ENCODE measurements at regions of chr5 and their contacts with region 1.

Region 1: GRCh38 chr5:38831909-38832308 is 13.9 kb upstream of the OSMR start:
- DNase-seq: no peak
- H3K4me3 ChIP-seq: no peak overlapping the region
- H3K27ac ChIP-seq: no peak overlapping the region
- H3K4me1 ChIP-seq: peaks cover 0 to 29% (median 15%) of the 10 kb centered on the region in 6 donors
- H3K27me3 ChIP-seq: peaks cover 0 to 11% (median 0%) of the 10 kb centered on the region in 7 donors
- CTCF ChIP-seq: peak in 7 of 11 experiments; percentile 9 to 59 (median 19)
- POLR2A ChIP-seq: no peak

Region 2: GRCh38 chr5:38607396-38607795 is 224.5 kb before region 1 on chr5:
- intact Hi-C with region 1: no loop called
- DNase-seq: no peak
- H3K4me3 ChIP-seq: no peak overlapping the region
- H3K27ac ChIP-seq: no peak overlapping the region
- H3K4me1 ChIP-seq: no peaks in the 10 kb centered on the region
- H3K27me3 ChIP-seq: no peaks in the 10 kb centered on the region
- CTCF ChIP-seq: no peak
- POLR2A ChIP-seq: no peak

Region 3: DNA sequence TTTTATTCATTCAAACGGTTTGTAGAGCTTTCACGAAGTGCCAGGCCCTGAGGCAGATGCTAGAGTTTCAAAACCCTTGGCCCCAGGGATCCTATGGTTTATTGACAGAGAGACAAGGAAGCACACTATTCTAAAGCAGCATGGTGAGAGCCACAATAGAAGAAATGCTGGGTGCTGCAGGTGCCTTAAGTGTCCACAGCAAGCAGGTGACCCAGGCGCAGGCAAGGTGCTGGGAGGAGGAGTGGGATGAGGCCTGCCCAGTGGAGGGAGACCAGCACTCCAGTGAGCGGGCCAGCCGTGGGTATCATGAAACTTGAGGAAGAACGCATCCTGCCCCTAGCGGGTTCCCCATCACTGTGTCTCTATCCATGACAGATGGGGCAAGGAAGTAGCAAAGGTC is 84.9 kb after region 1 on chr5:
- intact Hi-C with region 1: loop called (anchors 10 kb)
- DNase-seq: no peak
- H3K4me3 ChIP-seq: no peak overlapping the region
- H3K27ac ChIP-seq: no peak overlapping the region
- H3K4me1 ChIP-seq: no peaks in the 10 kb centered on the region
- H3K27me3 ChIP-seq: peaks cover 0 to 4% (median 0%) of the 10 kb centered on the region in 7 donors
- CTCF ChIP-seq: no peak
- POLR2A ChIP-seq: no peak

Region 4: DNA sequence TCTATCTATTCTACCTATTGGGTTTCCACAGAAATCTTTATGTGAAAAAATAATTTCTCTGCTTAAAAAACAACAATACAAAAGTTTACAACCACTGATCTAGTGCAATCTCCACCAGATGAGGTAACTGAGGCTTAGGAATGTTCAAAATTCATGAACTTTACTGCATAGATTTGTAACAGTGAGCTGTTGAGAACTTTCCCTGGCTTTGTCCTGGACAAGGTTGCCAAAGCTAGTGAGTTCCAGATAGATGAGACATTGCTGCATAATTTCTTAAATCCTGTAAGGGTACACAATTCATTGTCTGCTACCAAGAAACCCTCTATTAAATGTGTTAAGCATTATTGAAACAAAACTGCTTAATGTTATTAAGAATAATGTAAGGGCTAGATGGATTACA is 116.6 kb after region 1 on chr5:
- intact Hi-C with region 1: no loop called
- DNase-seq: no peak
- H3K4me3 ChIP-seq: no peak overlapping the region
- H3K27ac ChIP-seq: no peak overlapping the region
- H3K4me1 ChIP-seq: no peaks in the 10 kb centered on the region
- H3K27me3 ChIP-seq: no peaks in the 10 kb centered on the region
- CTCF ChIP-seq: no peak
- POLR2A ChIP-seq: no peak

Region 5: GRCh38 chr5:39264528-39264927 is 432.6 kb after region 1 on chr5:
- intact Hi-C with region 1: no loop called
- DNase-seq: no peak
- H3K4me3 ChIP-seq: no peak overlapping the region
- H3K27ac ChIP-seq: peak overlapping the region in 5 of 8 donors; percentile 30 to 93 (median 43)
- H3K4me1 ChIP-seq: peaks cover 0 to 78% (median 31%) of the 10 kb centered on the region in 6 donors
- H3K27me3 ChIP-seq: no peaks in the 10 kb centered on the region
- CTCF ChIP-seq: no peak
- POLR2A ChIP-seq: no peak